ENCODE measurements at regions of chr3 and their contacts with region 1.

Region 1: DNA sequence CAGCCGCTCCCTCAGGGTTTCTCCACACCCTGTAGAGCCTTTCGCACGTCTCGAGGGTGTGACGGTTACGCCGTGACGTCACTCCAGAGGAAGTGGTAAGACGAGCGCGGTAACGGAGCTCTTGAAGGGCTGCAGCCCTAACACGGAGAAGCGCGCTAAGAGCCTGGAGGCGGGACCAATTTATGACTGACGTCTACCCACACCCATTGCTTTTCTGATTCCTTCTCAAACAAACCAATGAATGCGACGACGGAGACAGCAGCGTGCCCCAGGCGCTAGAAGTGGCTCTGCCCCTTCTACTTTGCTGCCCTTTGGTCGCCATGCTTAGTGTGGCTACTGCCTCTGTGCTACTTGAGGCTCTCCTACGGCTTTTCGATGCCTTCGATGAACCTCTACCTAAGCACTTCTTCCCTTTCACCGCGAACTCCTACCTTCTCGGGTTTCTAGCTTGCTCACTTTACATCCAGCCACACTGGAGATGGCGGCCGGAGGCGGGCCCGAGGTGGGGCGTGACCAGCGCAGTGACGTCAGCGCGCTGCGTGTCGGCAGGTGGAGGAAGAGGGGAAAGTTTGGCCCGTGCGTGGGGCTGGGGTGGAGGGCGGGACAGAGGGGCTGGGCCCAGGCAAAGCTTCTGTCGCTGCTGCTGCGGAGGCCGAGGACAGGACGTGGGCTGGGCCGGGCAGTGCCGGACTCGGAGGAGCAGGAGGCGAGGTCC is at the start of gene OXSR1:
- DNase-seq: peak; percentile 91 to 100 (median 97)
- ATAC-seq: peak; percentile 89
- H3K4me3 ChIP-seq: peak within 1 kb of the TSS; percentile 76 to 84
- H3K4me3 Mint-ChIP-seq: peak within 1 kb of the TSS; percentile 91
- H3K27ac ChIP-seq: peak within 1 kb of the TSS; percentile 94 to 99
- H3K27ac Mint-ChIP-seq: peak within 1 kb of the TSS; percentile 100
- H3K4me1 ChIP-seq: peaks cover 23% of the 10 kb centered on the region
- H3K4me1 Mint-ChIP-seq: peaks cover 46% of the 10 kb centered on the region
- H3K27me3 ChIP-seq: no peaks in the 10 kb centered on the region
- H3K27me3 Mint-ChIP-seq: no peaks in the 10 kb centered on the region
- CTCF ChIP-seq: no peak
- total RNA-seq, gene OXSR1: 45.4 to 45.6 TPM

Region 2: GRCh38 chr3:38039101-38039898 is 125.8 kb before region 1 on chr3 and contains the start of gene DLEC1:
- CTCF ChIA-PET with region 1: no interaction called
- POLR2A ChIA-PET with region 1: interaction called, 10 read pairs
- intact Hi-C with region 1: no loop called
- DNase-seq: peak; percentile 61 to 95 (median 86)
- ATAC-seq: peak; percentile 61
- H3K4me3 ChIP-seq: peak within 1 kb of the TSS; percentile 65 to 67
- H3K4me3 Mint-ChIP-seq: peak within 1 kb of the TSS; percentile 83
- H3K27ac ChIP-seq: peak within 1 kb of the TSS; percentile 62 to 90
- H3K27ac Mint-ChIP-seq: peak within 1 kb of the TSS; percentile 96
- H3K4me1 ChIP-seq: peaks cover 25% of the 10 kb centered on the region
- H3K4me1 Mint-ChIP-seq: peaks cover 27% of the 10 kb centered on the region
- H3K27me3 ChIP-seq: no peaks in the 10 kb centered on the region
- H3K27me3 Mint-ChIP-seq: no peaks in the 10 kb centered on the region
- CTCF ChIP-seq: no peak
- total RNA-seq, gene DLEC1: 1.8 to 1.9 TPM

Region 3: DNA sequence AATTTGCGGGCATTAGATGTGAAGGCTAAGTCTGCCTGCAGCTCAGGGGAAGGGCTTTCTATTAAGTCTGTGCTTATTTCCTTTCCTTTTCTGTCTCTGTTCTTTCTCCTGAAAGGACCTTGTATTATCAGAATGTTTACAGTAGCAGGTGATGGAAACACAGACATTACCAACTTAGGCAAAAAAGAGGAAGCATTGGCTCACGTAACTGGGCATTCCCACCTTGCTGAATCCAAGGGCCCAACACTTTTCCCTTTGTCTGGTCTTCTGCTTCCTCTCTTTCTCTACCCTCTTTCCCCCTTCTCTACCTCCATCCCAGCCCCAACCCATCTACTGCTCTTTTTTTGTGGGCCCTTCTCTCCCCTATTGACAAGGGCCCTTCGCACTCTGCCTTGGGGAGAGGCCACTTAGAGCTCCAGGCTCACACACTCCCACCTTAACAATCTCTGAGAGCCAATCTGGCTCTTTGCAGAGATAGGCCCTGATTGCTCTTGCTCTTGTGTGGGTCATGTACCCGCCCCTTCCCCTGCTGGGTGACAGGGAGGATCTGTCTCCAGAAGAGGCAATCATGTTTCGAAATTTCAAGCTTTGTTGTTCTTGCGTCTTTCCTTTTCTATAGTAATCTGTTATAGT is 63.2 kb before region 1 on chr3:
- CTCF ChIA-PET with region 1: no interaction called
- POLR2A ChIA-PET with region 1: no interaction called
- intact Hi-C with region 1: no loop called
- DNase-seq: no peak
- ATAC-seq: no peak
- H3K4me3 ChIP-seq: no peak overlapping the region
- H3K4me3 Mint-ChIP-seq: no peak overlapping the region
- H3K27ac ChIP-seq: no peak overlapping the region
- H3K27ac Mint-ChIP-seq: no peak overlapping the region
- H3K4me1 ChIP-seq: no peaks in the 10 kb centered on the region
- H3K4me1 Mint-ChIP-seq: no peaks in the 10 kb centered on the region
- H3K27me3 ChIP-seq: no peaks in the 10 kb centered on the region
- H3K27me3 Mint-ChIP-seq: peaks cover 6% of the 10 kb centered on the region
- CTCF ChIP-seq: no peak

Region 4: DNA sequence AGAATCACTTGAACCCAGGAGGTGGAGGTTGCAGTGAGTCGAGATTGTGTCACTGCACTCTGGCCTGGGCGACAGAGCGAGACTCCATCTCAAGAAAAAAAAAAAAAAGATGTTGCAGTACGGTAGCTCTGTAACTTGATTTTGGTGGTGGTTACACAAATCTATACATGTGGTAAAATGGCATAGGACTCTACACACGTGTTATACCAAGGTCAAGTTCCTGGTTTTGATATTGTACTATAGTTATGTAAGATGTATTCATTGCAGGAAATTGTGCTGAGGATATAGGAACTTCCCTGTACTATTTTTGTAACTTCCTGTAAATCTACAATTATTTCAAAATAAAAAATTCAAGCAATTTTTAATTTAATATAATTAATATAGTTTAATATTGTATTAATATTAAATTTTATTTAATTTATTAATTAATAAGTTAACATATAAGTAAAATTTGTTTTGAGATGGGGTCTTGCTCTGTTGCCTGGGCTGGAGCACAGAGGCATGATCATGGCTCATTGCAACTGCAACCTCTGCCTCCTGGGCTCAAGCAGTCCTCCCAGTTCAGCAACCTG is 16.7 kb before region 1 on chr3:
- CTCF ChIA-PET with region 1: interaction called, 8 read pairs
- POLR2A ChIA-PET with region 1: interaction called, 10 read pairs
- intact Hi-C with region 1: no loop called
- DNase-seq: no peak
- ATAC-seq: no peak
- H3K4me3 ChIP-seq: no peak overlapping the region
- H3K4me3 Mint-ChIP-seq: no peak overlapping the region
- H3K27ac ChIP-seq: no peak overlapping the region
- H3K27ac Mint-ChIP-seq: no peak overlapping the region
- H3K4me1 ChIP-seq: peaks cover 9% of the 10 kb centered on the region
- H3K4me1 Mint-ChIP-seq: peaks cover 26% of the 10 kb centered on the region
- H3K27me3 ChIP-seq: no peaks in the 10 kb centered on the region
- H3K27me3 Mint-ChIP-seq: no peaks in the 10 kb centered on the region
- CTCF ChIP-seq: no peak

Region 5: GRCh38 chr3:38354588-38355330 is 189.6 kb after region 1 on chr3:
- CTCF ChIA-PET with region 1: no interaction called
- POLR2A ChIA-PET with region 1: no interaction called
- intact Hi-C with region 1: no loop called
- DNase-seq: no peak
- ATAC-seq: no peak
- H3K4me3 ChIP-seq: no peak overlapping the region
- H3K4me3 Mint-ChIP-seq: no peak overlapping the region
- H3K27ac ChIP-seq: no peak overlapping the region
- H3K27ac Mint-ChIP-seq: no peak overlapping the region
- H3K4me1 ChIP-seq: no peaks in the 10 kb centered on the region
- H3K4me1 Mint-ChIP-seq: no peaks in the 10 kb centered on the region
- H3K27me3 ChIP-seq: no peaks in the 10 kb centered on the region
- H3K27me3 Mint-ChIP-seq: no peaks in the 10 kb centered on the region
- CTCF ChIP-seq: no peak

Measured in CD8-positive, alpha-beta T cell (primary cell).